Sigmoid colon (tissue), 7 donors: ENCODE measurements at regions of chr6 and their contacts with region 1.

Region 1: DNA sequence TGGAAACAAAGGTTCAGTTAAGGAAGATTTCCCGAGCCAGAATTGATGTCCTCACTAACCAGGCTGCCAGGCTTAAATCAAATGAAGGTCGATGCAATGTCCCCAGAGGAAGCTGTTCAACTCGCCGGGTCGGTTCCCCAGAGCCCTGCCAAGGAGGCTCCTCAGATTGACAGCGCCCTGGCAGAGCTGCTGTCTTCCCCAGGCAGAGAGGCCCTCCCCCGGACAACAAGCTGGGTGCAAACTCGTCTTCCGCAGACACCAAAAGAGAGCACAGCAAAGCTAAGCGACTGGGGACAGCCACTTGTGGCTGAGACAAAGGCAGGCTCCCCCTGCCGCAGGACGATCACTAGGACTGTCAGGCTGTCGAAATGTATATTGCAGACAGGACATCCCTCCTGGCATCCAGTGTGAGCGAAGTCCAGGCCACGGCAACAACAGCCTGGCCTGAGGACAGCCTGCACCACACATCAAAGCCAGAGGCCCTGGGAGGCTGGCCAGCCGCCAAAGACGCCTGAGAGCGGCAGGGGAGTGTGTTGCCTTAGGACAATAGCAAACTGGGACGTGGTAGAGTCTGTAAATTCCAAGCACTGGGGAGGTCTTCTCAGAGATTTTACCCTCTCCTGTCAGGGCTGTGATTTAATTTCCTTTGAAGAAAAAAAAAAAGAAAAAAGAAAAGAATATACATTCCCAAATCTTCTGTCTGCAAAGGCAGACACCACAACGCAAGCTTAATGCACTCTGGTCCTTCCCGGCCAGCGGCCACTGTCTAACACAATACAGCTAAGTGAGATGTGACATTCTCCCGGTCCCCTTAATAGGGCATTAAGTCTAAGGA is 99.1 kb downstream of the HIVEP2 start:
- DNase-seq: peak; percentile 91
- H3K4me3 ChIP-seq: peak overlapping the region in 3 of 4 donors; percentile 33 to 43 (median 34)
- H3K27ac ChIP-seq: peak overlapping the region; percentile 70 to 81 (median 78)
- H3K4me1 ChIP-seq: peaks cover 0 to 70% (median 41%) of the 10 kb centered on the region in 4 donors
- H3K27me3 ChIP-seq: no peaks in the 10 kb centered on the region
- CTCF ChIP-seq: no peak
- EP300 ChIP-seq: no peak
- POLR2A ChIP-seq: no peak

Region 2: DNA sequence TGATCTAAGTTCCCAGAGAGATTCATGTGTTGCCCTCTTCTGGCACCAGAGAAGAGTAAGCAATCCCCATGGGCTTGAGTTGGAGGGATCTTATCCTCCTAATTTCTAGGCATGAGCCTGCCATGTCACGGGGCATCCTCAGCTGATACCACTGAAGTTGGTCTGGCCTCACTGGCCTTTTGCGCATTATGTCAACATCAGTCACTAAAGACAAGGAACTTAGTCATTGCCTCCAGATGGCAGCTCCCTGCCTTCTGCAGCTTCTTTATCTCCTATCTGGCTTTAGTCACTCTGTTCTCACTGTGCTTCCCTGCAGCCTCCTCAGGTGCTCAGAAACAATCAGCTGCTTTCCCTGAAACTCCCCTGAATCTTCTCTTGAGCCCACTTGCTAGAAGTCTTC is 231.9 kb before region 1 on chr6:
- intact Hi-C with region 1: no loop called
- DNase-seq: no peak
- H3K4me3 ChIP-seq: no peak overlapping the region
- H3K27ac ChIP-seq: no peak overlapping the region
- H3K4me1 ChIP-seq: no peaks in the 10 kb centered on the region
- H3K27me3 ChIP-seq: no peaks in the 10 kb centered on the region
- CTCF ChIP-seq: no peak
- EP300 ChIP-seq: no peak
- POLR2A ChIP-seq: no peak

Region 3: DNA sequence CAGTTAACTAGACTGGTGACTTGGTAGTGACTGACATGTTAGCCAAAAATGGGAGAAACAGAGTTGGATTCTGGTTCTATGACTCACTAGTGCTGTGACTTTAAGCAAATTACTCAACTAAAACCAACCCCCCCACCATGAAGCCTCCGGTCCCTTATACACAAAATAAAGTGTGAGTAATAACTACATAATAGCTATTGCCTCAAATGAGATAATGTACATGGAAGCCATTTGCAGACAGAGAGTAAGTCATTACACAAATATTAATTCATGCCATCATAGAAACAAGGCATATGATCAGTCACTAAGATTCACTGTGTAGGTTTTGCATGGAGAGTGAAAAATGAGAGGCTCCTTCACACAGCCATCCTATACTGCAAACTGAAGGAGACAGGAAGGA is 12.8 kb before region 1 on chr6:
- intact Hi-C with region 1: no loop called
- DNase-seq: no peak
- H3K4me3 ChIP-seq: no peak overlapping the region
- H3K27ac ChIP-seq: no peak overlapping the region
- H3K4me1 ChIP-seq: peaks cover 0 to 10% (median 4%) of the 10 kb centered on the region in 4 donors
- H3K27me3 ChIP-seq: no peaks in the 10 kb centered on the region
- CTCF ChIP-seq: no peak
- EP300 ChIP-seq: no peak
- POLR2A ChIP-seq: no peak

Region 4: GRCh38 chr6:143060354-143060805 is 214.5 kb after region 1 on chr6:
- intact Hi-C with region 1: loop called (anchors 10 kb)
- DNase-seq: peak; percentile 91
- H3K4me3 ChIP-seq: peak overlapping the region; percentile 70 to 93 (median 84)
- H3K27ac ChIP-seq: peak overlapping the region; percentile 83 to 92 (median 89)
- H3K4me1 ChIP-seq: peaks cover 0 to 19% (median 11%) of the 10 kb centered on the region in 4 donors
- H3K27me3 ChIP-seq: no peaks in the 10 kb centered on the region
- CTCF ChIP-seq: no peak
- EP300 ChIP-seq: peak in 1 of 4 donors; percentile 58
- POLR2A ChIP-seq: peak in 1 of 2 donors; percentile 35